Right ventricle myocardium inferior (tissue), 1 donor: ENCODE measurements at regions of chr3 and their contacts with region 1.

Region 1: DNA sequence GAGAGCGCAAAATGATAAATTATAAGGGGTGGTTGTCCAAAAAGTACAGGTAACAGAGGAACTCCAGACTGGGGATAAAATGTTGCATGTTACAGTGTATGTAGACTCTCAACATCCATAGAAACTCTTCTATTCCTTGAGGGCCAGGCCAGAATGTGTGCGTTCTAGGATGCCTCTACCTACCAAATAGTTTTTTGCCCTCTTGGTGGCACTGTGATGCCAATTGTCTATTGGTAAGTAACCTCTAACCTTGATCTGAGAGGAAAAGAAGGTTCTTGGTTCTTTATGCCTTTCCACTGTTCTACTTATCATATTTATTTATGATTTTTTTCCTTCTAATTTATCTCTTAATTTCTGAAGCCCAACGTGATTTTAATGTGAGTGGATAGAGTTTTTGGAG is 424.6 kb downstream of the GRM7 start:
- DNase-seq: no peak
- ATAC-seq: no peak

Region 2: GRCh38 chr3:7322957-7323669 is 37.6 kb after region 1 on chr3:
- intact Hi-C with region 1: no loop called
- DNase-seq: no peak
- ATAC-seq: no peak

Region 3: GRCh38 chr3:7546253-7546652 is 260.7 kb after region 1 on chr3:
- intact Hi-C with region 1: loop called (anchors 1 kb)
- DNase-seq: no peak
- ATAC-seq: no peak